ENCODE measurements at regions of chr12 and their contacts with region 1.

Region 1: DNA sequence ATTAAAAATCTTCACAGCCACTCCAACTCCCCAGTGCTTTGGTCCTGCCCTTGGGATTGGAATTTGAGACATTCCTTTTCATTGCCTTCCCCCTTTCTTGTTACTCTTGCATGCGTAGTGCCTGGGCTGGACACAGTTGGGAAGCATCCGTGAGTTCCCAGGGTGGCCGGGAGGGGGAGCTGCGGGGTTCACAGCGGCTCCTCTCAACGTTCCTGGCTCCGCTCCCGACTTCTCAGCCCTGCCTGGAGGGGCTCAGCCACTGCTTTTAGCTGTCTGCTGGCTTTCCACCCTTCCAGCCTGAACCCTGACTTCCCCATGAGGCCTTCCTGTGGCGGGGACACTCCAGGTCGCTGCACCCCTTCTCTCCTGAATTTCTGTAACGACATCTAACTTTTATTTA is 3.2 kb downstream of the TEX52 start:
- DNase-seq: peak; percentile 84 to 90 (median 85)
- ATAC-seq: peak; percentile 68 to 95 (median 90)
- H3K4me3 ChIP-seq: no peak overlapping the region
- H3K27ac ChIP-seq: no peak overlapping the region
- H3K4me1 ChIP-seq: peaks cover 0 to 3% (median 0%) of the 10 kb centered on the region in 12 donors
- H3K27me3 ChIP-seq: no peaks in the 10 kb centered on the region
- CTCF ChIP-seq: peak; percentile 72 to 92 (median 81)
- POLR2A ChIP-seq: no peak

Region 2: GRCh38 chr12:2998789-2999264 is 145.2 kb after region 1 on chr12:
- intact Hi-C with region 1: no loop called
- DNase-seq: peak; percentile 81 to 87 (median 82)
- ATAC-seq: peak; percentile 94 to 98 (median 98)
- H3K4me3 ChIP-seq: peak overlapping the region in 3 of 12 donors; percentile 11 to 35 (median 23)
- H3K27ac ChIP-seq: peak overlapping the region in 10 of 12 donors; percentile 9 to 87 (median 74)
- H3K4me1 ChIP-seq: peaks cover 0 to 22% (median 8%) of the 10 kb centered on the region in 12 donors
- H3K27me3 ChIP-seq: no peaks in the 10 kb centered on the region
- CTCF ChIP-seq: no peak
- POLR2A ChIP-seq: no peak

Region 3: GRCh38 chr12:3041558-3042164 is 188.0 kb after region 1 on chr12:
- intact Hi-C with region 1: loop called in 8 of 10 experiments (anchors 2 to 10 kb)
- DNase-seq: peak; percentile 51 to 63 (median 60)
- ATAC-seq: peak in 3 of 4 donors; percentile 27 to 53 (median 35)
- H3K4me3 ChIP-seq: no peak overlapping the region
- H3K27ac ChIP-seq: peak overlapping the region in 1 of 12 donors; percentile 35
- H3K4me1 ChIP-seq: peaks cover 0 to 24% (median 5%) of the 10 kb centered on the region in 12 donors
- H3K27me3 ChIP-seq: peaks cover 0 to 2% (median 0%) of the 10 kb centered on the region in 9 donors
- CTCF ChIP-seq: peak; percentile 47 to 75 (median 66)
- POLR2A ChIP-seq: no peak

Region 4: GRCh38 chr12:3107071-3107583 is 253.5 kb after region 1 on chr12:
- intact Hi-C with region 1: no loop called
- DNase-seq: no peak
- ATAC-seq: no peak
- H3K4me3 ChIP-seq: no peak overlapping the region
- H3K27ac ChIP-seq: peak overlapping the region in 7 of 12 donors; percentile 7 to 58 (median 35)
- H3K4me1 ChIP-seq: peaks cover 18 to 68% (median 51%) of the 10 kb centered on the region in 12 donors
- H3K27me3 ChIP-seq: no peaks in the 10 kb centered on the region
- CTCF ChIP-seq: no peak
- POLR2A ChIP-seq: no peak